Naive thymus-derived CD4-positive, alpha-beta T cell (primary cell): ENCODE measurements at regions of chr1 and their contacts with region 1.

Region 1: GRCh38 chr1:66446261-66447001 is 87.5 kb upstream of the SGIP1 start:
- DNase-seq: peak in 7 of 9 donors; percentile 45 to 82 (median 74)
- ATAC-seq: peak; percentile 85
- H3K4me3 ChIP-seq: no peak overlapping the region
- H3K4me3 Mint-ChIP-seq: peak overlapping the region in 9 of 10 donors; percentile 59 to 85 (median 74)
- H3K27ac ChIP-seq: peak overlapping the region; percentile 72
- H3K27ac Mint-ChIP-seq: peak overlapping the region; percentile 87 to 98 (median 94)
- H3K4me1 ChIP-seq: peaks cover 12 to 18% of the 10 kb centered on the region in 2 donors
- H3K4me1 Mint-ChIP-seq: peaks cover 18 to 32% (median 25%) of the 10 kb centered on the region in 7 donors
- H3K27me3 ChIP-seq: no peaks in the 10 kb centered on the region
- H3K27me3 Mint-ChIP-seq: peaks cover 0 to 20% (median 0%) of the 10 kb centered on the region in 5 donors

Region 2: DNA sequence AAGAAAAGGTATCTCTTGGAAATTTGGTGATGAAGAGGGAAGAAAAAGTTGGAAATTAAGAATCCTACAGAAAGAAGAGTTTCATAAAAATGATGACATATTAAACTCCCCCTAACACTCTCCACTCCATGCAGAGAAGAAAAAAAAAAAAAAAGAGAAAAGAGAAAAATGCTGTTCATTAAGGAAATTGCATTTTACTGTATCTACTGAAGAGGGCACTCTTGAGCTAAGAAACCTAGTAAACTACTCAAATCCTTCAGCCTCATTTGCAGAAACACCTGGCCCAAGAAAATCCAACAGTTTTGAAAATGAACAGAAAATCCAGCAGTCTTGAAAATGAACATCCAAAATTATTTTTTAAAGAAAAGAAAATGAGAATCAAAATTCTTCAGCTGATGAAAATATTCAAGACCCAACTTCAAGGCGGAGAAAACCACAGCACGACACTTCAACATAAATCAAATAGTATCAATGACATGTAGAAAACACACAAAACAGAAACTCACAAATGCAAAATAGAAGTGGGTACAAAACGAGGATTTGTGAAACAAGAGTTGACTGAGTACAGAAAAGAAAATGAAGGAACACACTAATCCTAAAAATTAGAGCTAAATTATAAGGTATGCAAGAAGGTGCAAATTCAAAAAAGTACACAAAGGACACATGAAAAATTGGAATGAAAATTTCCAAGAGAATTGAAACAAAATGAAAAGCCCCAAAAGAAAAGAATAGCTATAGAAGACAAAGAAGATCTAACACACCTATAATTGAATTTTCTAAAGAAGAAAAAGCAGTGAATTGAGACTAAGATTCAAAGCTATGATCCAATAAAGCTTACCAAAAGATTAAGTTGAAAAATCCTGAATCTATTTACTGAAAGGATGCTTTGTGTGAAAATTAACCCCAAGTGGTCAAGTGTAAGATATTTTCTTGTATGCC is 1210.3 kb before region 1 on chr1:
- CTCF ChIA-PET with region 1: no interaction called
- POLR2A ChIA-PET with region 1: no interaction called
- intact Hi-C with region 1: loop called in 1 of 2 experiments (anchors 10 kb)
- DNase-seq: peak in 4 of 9 donors; percentile 12 to 28 (median 22)
- ATAC-seq: peak; percentile 54
- H3K4me3 ChIP-seq: no peak overlapping the region
- H3K4me3 Mint-ChIP-seq: no peak overlapping the region
- H3K27ac ChIP-seq: no peak overlapping the region
- H3K27ac Mint-ChIP-seq: no peak overlapping the region
- H3K4me1 ChIP-seq: no peaks in the 10 kb centered on the region
- H3K4me1 Mint-ChIP-seq: peaks cover 2 to 18% (median 2%) of the 10 kb centered on the region in 7 donors
- H3K27me3 ChIP-seq: no peaks in the 10 kb centered on the region
- H3K27me3 Mint-ChIP-seq: peaks cover 6 to 23% (median 14%) of the 10 kb centered on the region in 5 donors

Region 3: GRCh38 chr1:65812065-65812464 is 634.4 kb before region 1 on chr1:
- CTCF ChIA-PET with region 1: no interaction called
- POLR2A ChIA-PET with region 1: no interaction called
- intact Hi-C with region 1: loop called in 1 of 2 experiments (anchors 5 kb)
- DNase-seq: peak in 1 of 9 donors; percentile 67
- ATAC-seq: peak; percentile 94
- H3K4me3 ChIP-seq: no peak overlapping the region
- H3K4me3 Mint-ChIP-seq: peak overlapping the region in 1 of 10 donors; percentile 3
- H3K27ac ChIP-seq: no peak overlapping the region
- H3K27ac Mint-ChIP-seq: peak overlapping the region in 1 of 9 donors; percentile 67
- H3K4me1 ChIP-seq: no peaks in the 10 kb centered on the region
- H3K4me1 Mint-ChIP-seq: peaks cover 0 to 26% (median 0%) of the 10 kb centered on the region in 7 donors
- H3K27me3 ChIP-seq: no peaks in the 10 kb centered on the region
- H3K27me3 Mint-ChIP-seq: peaks cover 18 to 24% (median 19%) of the 10 kb centered on the region in 5 donors

Region 4: GRCh38 chr1:66253330-66253921 is 193.0 kb before region 1 on chr1:
- CTCF ChIA-PET with region 1: interaction called, 274 read pairs
- POLR2A ChIA-PET with region 1: interaction called, 8 read pairs
- intact Hi-C with region 1: loop called (anchors 1 to 2 kb)
- DNase-seq: peak in 6 of 9 donors; percentile 29 to 58 (median 46)
- ATAC-seq: peak; percentile 83
- H3K4me3 ChIP-seq: no peak overlapping the region
- H3K4me3 Mint-ChIP-seq: no peak overlapping the region
- H3K27ac ChIP-seq: no peak overlapping the region
- H3K27ac Mint-ChIP-seq: peak overlapping the region in 2 of 9 donors; percentile 19 to 64
- H3K4me1 ChIP-seq: peaks cover 10 to 12% of the 10 kb centered on the region in 2 donors
- H3K4me1 Mint-ChIP-seq: peaks cover 6 to 57% (median 19%) of the 10 kb centered on the region in 7 donors
- H3K27me3 ChIP-seq: no peaks in the 10 kb centered on the region
- H3K27me3 Mint-ChIP-seq: no peaks in the 10 kb centered on the region

Region 5: DNA sequence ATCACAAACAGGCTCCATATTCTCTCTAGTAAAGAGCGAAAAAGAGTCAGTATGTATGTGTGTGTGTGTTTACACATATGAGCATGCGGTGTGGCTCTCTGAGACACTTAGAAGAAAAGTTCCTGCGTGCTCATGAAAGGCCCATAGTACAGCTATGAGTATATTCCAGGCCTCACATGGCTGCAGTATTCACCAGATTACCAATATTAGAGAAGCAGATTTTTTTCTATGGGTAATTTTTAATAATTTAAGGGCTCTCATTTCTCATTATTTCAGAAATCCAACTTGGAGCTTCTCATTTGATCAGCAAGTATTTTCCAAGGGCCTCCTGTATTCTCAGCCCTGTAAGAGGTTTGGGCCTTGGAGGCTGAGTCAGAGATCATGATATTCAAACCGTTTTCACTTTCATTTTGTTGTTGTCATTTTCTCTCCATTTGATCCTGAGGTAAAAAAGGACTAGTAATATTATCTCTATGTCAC is 145.4 kb before region 1 on chr1:
- CTCF ChIA-PET with region 1: interaction called, 8 read pairs
- POLR2A ChIA-PET with region 1: no interaction called
- intact Hi-C with region 1: loop called in 1 of 2 experiments (anchors 1 kb)
- DNase-seq: peak in 7 of 9 donors; percentile 32 to 62 (median 45)
- ATAC-seq: peak; percentile 80
- H3K4me3 ChIP-seq: peak overlapping the region; percentile 12
- H3K4me3 Mint-ChIP-seq: peak overlapping the region; percentile 68 to 92 (median 85)
- H3K27ac ChIP-seq: peak overlapping the region; percentile 5
- H3K27ac Mint-ChIP-seq: peak overlapping the region; percentile 82 to 98 (median 91)
- H3K4me1 ChIP-seq: peaks cover 24 to 29% of the 10 kb centered on the region in 2 donors
- H3K4me1 Mint-ChIP-seq: peaks cover 12 to 46% (median 30%) of the 10 kb centered on the region in 7 donors
- H3K27me3 ChIP-seq: no peaks in the 10 kb centered on the region
- H3K27me3 Mint-ChIP-seq: peaks cover 0 to 3% (median 0%) of the 10 kb centered on the region in 5 donors

Region 6: DNA sequence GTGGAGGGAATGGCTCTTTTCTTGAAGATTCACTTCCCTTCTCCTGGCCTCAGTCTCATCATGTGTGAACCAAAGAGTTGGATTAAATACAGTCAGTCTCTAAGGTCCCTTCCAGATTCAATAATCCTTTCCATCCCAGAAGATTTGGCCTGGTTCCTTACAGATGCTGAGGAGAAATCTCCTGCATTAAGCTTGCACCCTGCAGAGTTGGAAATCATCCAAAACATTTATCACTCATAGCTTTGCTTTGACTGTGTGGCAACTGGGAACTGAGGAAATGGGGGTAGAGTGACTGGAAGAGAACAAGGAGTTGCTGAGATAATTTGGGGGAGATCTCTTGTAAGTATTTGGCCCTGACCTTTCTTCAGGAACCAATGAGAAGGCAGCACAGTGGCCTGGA is 133.0 kb before region 1 on chr1:
- CTCF ChIA-PET with region 1: no interaction called
- POLR2A ChIA-PET with region 1: no interaction called
- intact Hi-C with region 1: no loop called
- DNase-seq: no peak
- ATAC-seq: no peak
- H3K4me3 ChIP-seq: no peak overlapping the region
- H3K4me3 Mint-ChIP-seq: no peak overlapping the region
- H3K27ac ChIP-seq: no peak overlapping the region
- H3K27ac Mint-ChIP-seq: no peak overlapping the region
- H3K4me1 ChIP-seq: no peaks in the 10 kb centered on the region
- H3K4me1 Mint-ChIP-seq: peaks cover 3 to 15% (median 12%) of the 10 kb centered on the region in 7 donors
- H3K27me3 ChIP-seq: no peaks in the 10 kb centered on the region
- H3K27me3 Mint-ChIP-seq: no peaks in the 10 kb centered on the region

Region 7: DNA sequence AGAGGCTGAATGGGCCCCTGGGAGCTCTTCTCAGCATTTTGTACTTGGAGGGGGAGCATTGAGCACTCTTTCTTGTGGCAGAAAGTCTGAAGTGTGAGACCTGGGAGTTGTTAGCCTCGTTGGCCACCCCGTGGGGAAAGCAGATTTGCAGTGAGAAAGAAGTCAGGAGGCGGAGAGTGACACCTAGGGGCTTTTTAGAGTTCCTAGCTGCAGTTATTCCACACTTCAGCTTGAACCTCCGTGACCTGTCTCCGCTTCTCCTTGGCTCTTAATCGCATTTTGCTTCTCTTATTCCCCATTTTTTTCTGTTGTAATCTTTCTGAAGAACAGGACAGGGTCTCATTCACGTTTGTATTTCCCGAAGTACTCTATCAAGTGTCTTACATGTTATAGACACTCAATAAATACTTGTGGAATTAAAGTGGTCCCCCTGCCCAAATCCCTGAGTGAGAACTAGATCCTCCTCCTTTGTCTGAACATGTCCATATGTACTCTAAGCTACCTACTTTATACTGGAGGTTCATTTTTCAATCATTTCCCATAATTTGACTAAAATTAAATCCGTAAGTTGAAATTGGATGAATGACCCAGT is 702.8 kb after region 1 on chr1:
- CTCF ChIA-PET with region 1: no interaction called
- POLR2A ChIA-PET with region 1: no interaction called
- intact Hi-C with region 1: loop called in 1 of 2 experiments (anchors 5 kb)
- DNase-seq: peak in 8 of 9 donors; percentile 49 to 81 (median 72)
- ATAC-seq: peak; percentile 91
- H3K4me3 ChIP-seq: no peak overlapping the region
- H3K4me3 Mint-ChIP-seq: peak overlapping the region in 3 of 10 donors; percentile 32 to 35 (median 33)
- H3K27ac ChIP-seq: no peak overlapping the region
- H3K27ac Mint-ChIP-seq: peak overlapping the region in 4 of 9 donors; percentile 34 to 75 (median 61)
- H3K4me1 ChIP-seq: peaks cover 0 to 6% of the 10 kb centered on the region in 2 donors
- H3K4me1 Mint-ChIP-seq: peaks cover 7 to 36% (median 34%) of the 10 kb centered on the region in 7 donors
- H3K27me3 ChIP-seq: no peaks in the 10 kb centered on the region
- H3K27me3 Mint-ChIP-seq: peaks cover 0 to 9% (median 0%) of the 10 kb centered on the region in 5 donors